ENCODE measurements at regions of chr10 and their contacts with region 1.

Region 1: DNA sequence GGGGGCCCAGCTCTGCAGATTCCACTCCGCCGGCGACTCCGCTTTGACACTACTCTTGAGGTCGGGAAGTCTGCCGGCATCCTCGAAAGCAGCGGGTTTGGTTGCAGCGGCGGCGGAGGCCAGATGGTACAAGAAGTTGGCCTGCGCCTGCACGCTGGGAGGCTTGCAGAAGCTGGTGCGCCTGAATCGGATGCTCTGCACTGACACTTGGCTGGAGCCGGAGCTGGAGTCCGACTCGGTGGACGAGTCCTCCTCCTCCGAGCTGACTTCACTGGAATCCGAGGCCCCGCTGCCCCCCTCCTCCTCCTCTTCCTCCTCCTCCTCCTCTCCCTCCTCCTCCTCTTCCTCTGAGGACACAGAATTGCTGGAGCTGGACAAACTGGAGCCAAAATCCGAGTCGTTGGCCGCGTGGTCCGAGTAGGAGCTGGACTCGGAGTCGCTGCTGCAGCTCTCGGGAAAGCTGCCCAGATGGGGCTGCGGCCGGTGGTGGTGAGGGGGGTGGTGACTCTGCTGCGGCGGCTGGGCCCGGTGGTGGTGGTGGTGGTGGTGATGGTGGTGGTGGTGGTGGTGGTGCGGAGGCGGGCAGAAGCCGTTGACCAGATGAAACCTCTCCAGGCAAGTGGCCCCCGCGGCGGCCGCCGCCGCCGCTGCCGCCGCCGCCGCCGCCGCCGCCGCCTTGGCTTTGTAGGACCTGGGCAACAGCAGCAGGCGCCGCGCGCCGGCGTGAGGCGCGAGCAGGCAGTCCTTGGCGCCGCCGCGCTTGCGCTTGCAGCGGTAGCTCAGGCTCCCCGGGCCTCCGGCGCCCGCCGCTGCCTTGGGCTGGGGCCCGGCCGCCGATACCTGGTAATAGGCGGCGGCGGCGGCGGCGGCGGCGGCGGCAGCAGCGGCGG is 9.0 kb downstream of the SKIDA1 start:
- DNase-seq: peak; percentile 78
- ATAC-seq: peak; percentile 62
- H3K4me3 ChIP-seq: peak overlapping the region; percentile 95
- H3K27ac ChIP-seq: peak overlapping the region; percentile 71
- H3K4me1 ChIP-seq: peaks cover 2% of the 10 kb centered on the region; the same call in 1 of the 2 replicates
- H3K27me3 ChIP-seq: no peaks in the 10 kb centered on the region
- CTCF ChIP-seq: no peak
- POLR2A ChIP-seq: no peak
- RAD21 ChIP-seq: peak; percentile 10; the same call in 1 of the 2 replicates

Region 2: GRCh38 chr10:21078410-21079329 is 437.8 kb before region 1 on chr10:
- CTCF ChIA-PET with region 1: no interaction called
- POLR2A ChIA-PET with region 1: no interaction called
- dilution Hi-C with region 1: no loop called
- in situ Hi-C with region 1: no loop called
- intact Hi-C with region 1: loop called (anchors 5 kb)
- DNase-seq: peak; percentile 61
- ATAC-seq: peak; percentile 98
- H3K4me3 ChIP-seq: no peak overlapping the region
- H3K27ac ChIP-seq: no peak overlapping the region
- H3K4me1 ChIP-seq: no peaks in the 10 kb centered on the region
- H3K27me3 ChIP-seq: 0 out of 2 replicates have a peak, but pooled peaks cover 2% of the 10 kb centered on the region
- CTCF ChIP-seq: peak; percentile 73
- POLR2A ChIP-seq: no peak
- RAD21 ChIP-seq: peak; percentile 84

Region 3: DNA sequence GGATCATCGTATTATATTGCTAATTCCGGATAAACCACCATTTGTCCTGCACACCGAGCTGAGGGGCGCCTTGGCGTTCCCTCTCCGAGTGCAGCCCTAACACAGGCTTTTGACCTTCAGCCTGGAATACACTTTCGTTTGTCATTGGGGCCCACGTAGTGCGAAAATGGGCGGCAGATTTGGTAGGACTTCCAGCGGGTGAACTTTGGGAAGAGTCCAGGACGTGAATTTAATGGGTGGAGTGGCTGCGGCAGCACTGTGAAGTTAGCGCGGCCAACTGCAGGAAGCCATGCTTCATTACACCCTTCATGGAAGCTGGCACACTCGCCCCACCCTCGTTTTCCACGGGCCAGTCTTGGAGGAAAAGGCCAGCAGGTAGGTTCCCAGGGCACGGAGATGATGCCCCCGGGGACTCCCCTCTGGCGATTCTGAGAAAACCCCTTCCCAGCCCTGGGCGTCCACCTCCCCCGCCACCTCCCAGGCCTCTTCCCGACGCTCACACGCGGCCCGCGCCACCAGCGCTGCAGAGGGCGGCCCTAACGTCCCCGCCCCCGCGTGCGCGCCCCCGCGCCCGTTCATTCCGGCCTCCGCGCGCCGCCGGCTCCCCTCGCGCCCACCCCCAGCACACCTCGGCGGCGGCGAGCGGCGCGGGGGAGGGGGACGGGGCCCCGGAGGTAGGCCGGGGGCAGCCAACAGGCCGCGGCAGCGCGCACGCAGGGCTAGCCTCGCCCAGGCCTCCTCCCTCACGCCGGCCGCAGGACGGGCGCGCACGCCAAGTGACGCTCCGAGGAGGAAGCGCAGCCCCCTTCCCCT is 17.2 kb after region 1 on chr10 and contains the start of gene MLLT10:
- CTCF ChIA-PET with region 1: no interaction called
- POLR2A ChIA-PET with region 1: no interaction called
- dilution Hi-C with region 1: no loop called
- in situ Hi-C with region 1: no loop called
- intact Hi-C with region 1: loop called (anchors 1 kb)
- DNase-seq: peak; percentile 94
- ATAC-seq: peak; percentile 94
- H3K4me3 ChIP-seq: peak within 1 kb of the TSS; percentile 89
- H3K27ac ChIP-seq: peak within 1 kb of the TSS; percentile 97
- H3K4me1 ChIP-seq: 0 out of 2 replicates have a peak, but pooled peaks cover 2% of the 10 kb centered on the region
- H3K27me3 ChIP-seq: no peaks in the 10 kb centered on the region
- CTCF ChIP-seq: peak; percentile 28
- POLR2A ChIP-seq: peak; percentile 59; the same call in 1 of the 2 replicates
- RAD21 ChIP-seq: no peak; the same call in 1 of the 2 replicates
- total RNA-seq, gene MLLT10: 29.0 and 31.9 TPM in 2 replicates

Region 4: DNA sequence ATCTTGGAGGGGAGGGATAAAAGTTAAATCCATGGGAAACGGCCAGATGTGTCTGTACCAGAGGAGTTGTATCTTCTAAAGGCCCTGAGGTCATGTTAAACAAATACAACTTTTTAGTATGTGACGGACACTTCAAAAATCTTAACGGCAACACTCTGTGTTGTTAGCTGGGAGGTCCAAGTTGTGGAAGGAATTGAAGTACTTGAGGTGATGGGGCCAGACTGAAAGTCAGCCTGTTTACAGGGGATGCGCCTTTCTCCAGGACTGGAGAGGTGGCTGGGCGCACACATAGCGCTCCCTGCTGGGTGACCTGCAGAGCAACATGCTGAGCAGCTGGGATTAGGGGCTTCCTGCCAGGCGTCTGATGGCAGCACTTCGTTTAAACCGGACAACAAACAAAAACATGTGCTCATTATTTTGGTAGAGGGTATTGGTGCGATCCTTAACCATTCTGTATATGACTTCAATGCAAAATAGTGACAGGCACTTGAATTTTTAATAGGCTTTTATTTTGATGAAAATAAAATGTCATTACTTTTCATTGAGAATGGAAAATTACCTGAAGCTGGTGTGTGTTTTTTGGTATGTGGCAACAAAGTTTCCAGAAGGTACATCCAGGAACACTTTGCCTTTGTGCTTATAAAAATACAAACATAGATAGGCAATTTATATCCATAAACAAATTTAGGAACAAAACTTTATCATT is 215.7 kb after region 1 on chr10:
- CTCF ChIA-PET with region 1: interaction called, 3 read pairs
- POLR2A ChIA-PET with region 1: no interaction called
- dilution Hi-C with region 1: no loop called
- in situ Hi-C with region 1: no loop called
- intact Hi-C with region 1: loop called (anchors 5 kb)
- DNase-seq: peak; percentile 82
- ATAC-seq: peak; percentile 95
- H3K4me3 ChIP-seq: no peak overlapping the region
- H3K27ac ChIP-seq: no peak overlapping the region
- H3K4me1 ChIP-seq: peaks cover 4% of the 10 kb centered on the region
- H3K27me3 ChIP-seq: no peaks in the 10 kb centered on the region
- CTCF ChIP-seq: peak; percentile 93
- POLR2A ChIP-seq: no peak
- RAD21 ChIP-seq: peak; percentile 93

Region 5: DNA sequence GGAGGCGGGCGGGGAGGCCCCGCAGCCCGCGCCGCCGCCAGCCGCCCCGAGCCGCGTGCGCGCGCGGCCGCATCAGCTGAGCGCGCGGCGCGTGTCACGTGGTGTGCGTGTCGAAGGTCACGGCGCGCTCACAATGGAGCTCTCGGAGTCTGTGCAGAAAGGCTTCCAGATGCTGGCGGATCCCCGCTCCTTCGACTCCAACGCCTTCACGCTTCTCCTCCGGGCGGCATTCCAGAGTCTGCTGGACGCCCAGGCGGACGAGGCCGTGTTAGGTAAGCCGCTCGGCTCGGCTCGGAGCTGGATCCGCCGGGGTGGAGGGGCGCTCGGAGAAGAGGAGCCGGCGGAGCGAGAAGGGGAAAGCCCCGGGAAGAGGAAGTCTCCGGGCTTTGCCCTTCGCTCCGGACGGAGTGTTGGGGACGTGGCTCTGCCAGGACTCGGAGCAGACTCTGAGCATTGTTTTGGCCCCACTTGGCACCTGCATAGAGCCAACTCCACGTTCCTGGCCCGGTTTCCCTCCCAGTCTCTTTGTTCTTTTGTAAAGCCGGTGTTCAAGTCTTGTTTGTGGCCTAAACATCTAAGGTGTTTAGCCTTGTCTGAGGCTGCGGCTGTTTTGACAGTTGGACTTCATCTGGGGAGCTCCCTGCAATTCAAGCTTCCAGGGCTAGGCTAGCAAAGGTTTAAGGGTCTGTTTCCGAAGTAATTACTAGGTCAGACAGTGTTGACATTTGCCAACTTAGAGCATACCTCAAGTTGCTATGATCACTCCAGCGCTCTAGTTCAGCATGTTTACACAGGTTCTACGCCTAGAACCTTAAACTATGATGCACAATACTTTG is 800.0 kb after region 1 on chr10 and contains the start of gene COMMD3:
- CTCF ChIA-PET with region 1: no interaction called
- POLR2A ChIA-PET with region 1: no interaction called
- dilution Hi-C with region 1: no loop called
- in situ Hi-C with region 1: loop called (anchors 25 kb)
- intact Hi-C with region 1: no loop called
- DNase-seq: peak; percentile 86
- ATAC-seq: peak; percentile 74
- H3K4me3 ChIP-seq: peak within 1 kb of the TSS; percentile 76
- H3K27ac ChIP-seq: peak within 1 kb of the TSS; percentile 93
- H3K4me1 ChIP-seq: no peaks in the 10 kb centered on the region
- H3K27me3 ChIP-seq: peaks cover 2% of the 10 kb centered on the region; the same call in 1 of the 2 replicates
- CTCF ChIP-seq: no peak
- POLR2A ChIP-seq: no peak
- RAD21 ChIP-seq: no peak
- total RNA-seq, gene COMMD3: 33.1 and 44.8 TPM in 2 replicates

Region 6: GRCh38 chr10:22436884-22437619 is 920.6 kb after region 1 on chr10:
- CTCF ChIA-PET with region 1: no interaction called
- POLR2A ChIA-PET with region 1: no interaction called
- dilution Hi-C with region 1: no loop called
- in situ Hi-C with region 1: loop called (anchors 25 kb)
- intact Hi-C with region 1: no loop called
- DNase-seq: peak; percentile 89
- ATAC-seq: peak; percentile 83
- H3K4me3 ChIP-seq: peak overlapping the region; percentile 56
- H3K27ac ChIP-seq: peak overlapping the region; percentile 90
- H3K4me1 ChIP-seq: peaks cover 8% of the 10 kb centered on the region; the same call in 1 of the 2 replicates
- H3K27me3 ChIP-seq: peaks cover 7% of the 10 kb centered on the region
- CTCF ChIP-seq: no peak
- POLR2A ChIP-seq: peak; percentile 82; the same call in 1 of the 2 replicates
- RAD21 ChIP-seq: no peak

Region 7: GRCh38 chr10:22615819-22616499 is 1099.5 kb after region 1 on chr10:
- CTCF ChIA-PET with region 1: no interaction called
- POLR2A ChIA-PET with region 1: no interaction called
- dilution Hi-C with region 1: no loop called
- in situ Hi-C with region 1: loop called (anchors 25 kb)
- intact Hi-C with region 1: no loop called
- DNase-seq: no peak
- ATAC-seq: no peak
- H3K4me3 ChIP-seq: no peak overlapping the region
- H3K27ac ChIP-seq: no peak overlapping the region
- H3K4me1 ChIP-seq: peaks cover 15% of the 10 kb centered on the region
- H3K27me3 ChIP-seq: no peaks in the 10 kb centered on the region
- CTCF ChIP-seq: no peak
- POLR2A ChIP-seq: no peak
- RAD21 ChIP-seq: no peak

Measured in IMR-90 (cell line).